HCT116 (cell line): ENCODE measurements at regions of chr11 and their contacts with region 1.

Region 1: GRCh38 chr11:120108154-120108865 is 29.6 kb downstream of the TRIM29 start:
- DNase-seq: no peak
- ATAC-seq: peak; percentile 97
- H3K4me3 ChIP-seq: no peak overlapping the region
- H3K27ac ChIP-seq: no peak overlapping the region
- H3K4me1 ChIP-seq: no peaks in the 10 kb centered on the region
- H3K27me3 ChIP-seq: peaks cover 20% of the 10 kb centered on the region; the same call in 1 of the 2 replicates
- CTCF ChIP-seq: peak; percentile 94 to 99 (median 99)
- POLR2A ChIP-seq: no peak
- RAD21 ChIP-seq: peak; percentile 99

Region 2: GRCh38 chr11:119481021-119481666 is 627.2 kb before region 1 on chr11:
- CTCF ChIA-PET with region 1: interaction called, 5 read pairs
- POLR2A ChIA-PET with region 1: no interaction called
- RAD21 ChIA-PET with region 1: no interaction called
- intact Hi-C with region 1: loop called (anchors 1 kb)
- DNase-seq: no peak
- ATAC-seq: peak; percentile 86
- H3K4me3 ChIP-seq: no peak overlapping the region
- H3K27ac ChIP-seq: no peak overlapping the region
- H3K4me1 ChIP-seq: peaks cover 3 to 22% of the 10 kb centered on the region in 2 experiments; a peak in 3 of 4 replicates
- H3K27me3 ChIP-seq: no peaks in the 10 kb centered on the region
- CTCF ChIP-seq: peak; percentile 93 to 99 (median 96)
- POLR2A ChIP-seq: no peak
- RAD21 ChIP-seq: peak; percentile 98

Region 3: GRCh38 chr11:119533921-119534736 is 574.2 kb before region 1 on chr11:
- CTCF ChIA-PET with region 1: interaction called, 3 read pairs
- POLR2A ChIA-PET with region 1: no interaction called
- RAD21 ChIA-PET with region 1: no interaction called
- intact Hi-C with region 1: loop called (anchors 2 kb)
- DNase-seq: peak; percentile 38
- ATAC-seq: peak; percentile 97
- H3K4me3 ChIP-seq: no peak overlapping the region
- H3K27ac ChIP-seq: no peak overlapping the region
- H3K4me1 ChIP-seq: peaks cover 0 to 6% of the 10 kb centered on the region in 2 experiments; a peak in 1 of 4 replicates
- H3K27me3 ChIP-seq: no peaks in the 10 kb centered on the region
- CTCF ChIP-seq: peak; percentile 94 to 99 (median 98)
- POLR2A ChIP-seq: no peak
- RAD21 ChIP-seq: peak; percentile 77

Region 4: DNA sequence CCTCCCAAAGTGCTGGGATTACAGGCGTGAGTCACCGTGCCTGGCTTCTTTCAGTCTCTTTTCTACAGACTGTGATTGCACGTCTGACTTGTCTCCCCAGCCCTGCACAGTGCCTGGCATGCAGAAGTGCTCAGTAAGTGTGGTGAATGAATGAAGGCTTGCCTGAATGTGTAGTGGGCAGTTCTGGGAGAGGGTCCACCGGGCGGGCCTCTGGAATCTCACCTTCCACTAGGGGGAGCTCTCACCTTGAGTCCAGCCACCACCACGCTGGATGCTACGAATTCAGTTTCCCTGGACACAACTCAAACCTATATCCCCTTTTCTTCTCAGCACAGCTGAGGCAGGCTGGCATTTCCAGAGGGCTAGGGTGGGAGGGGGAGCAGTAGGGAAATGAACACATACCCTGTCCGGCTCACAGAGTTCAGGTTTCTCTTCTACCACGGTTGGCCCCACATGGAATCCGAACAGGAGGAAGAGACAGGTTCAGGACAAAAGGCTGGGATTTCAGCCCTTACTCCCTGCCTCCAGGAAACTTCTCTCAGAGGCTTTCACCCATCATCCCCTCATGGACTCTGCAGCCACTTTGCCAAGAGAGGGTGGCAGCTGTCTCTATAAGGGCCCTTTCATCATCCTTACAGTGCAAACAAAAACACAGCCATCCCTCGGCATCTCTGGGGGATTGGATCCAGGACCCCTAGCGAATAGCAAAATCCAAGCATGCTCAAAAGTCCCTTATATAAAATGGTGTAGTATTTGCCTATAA is 466.1 kb before region 1 on chr11:
- CTCF ChIA-PET with region 1: no interaction called
- POLR2A ChIA-PET with region 1: no interaction called
- RAD21 ChIA-PET with region 1: no interaction called
- intact Hi-C with region 1: loop called (anchors 1 kb)
- DNase-seq: peak; percentile 4
- ATAC-seq: peak; percentile 84
- H3K4me3 ChIP-seq: no peak overlapping the region
- H3K27ac ChIP-seq: no peak overlapping the region
- H3K4me1 ChIP-seq: no peaks in the 10 kb centered on the region
- H3K27me3 ChIP-seq: no peaks in the 10 kb centered on the region
- CTCF ChIP-seq: peak; percentile 47 to 84 (median 81); a peak in 5 of 6 replicates
- POLR2A ChIP-seq: no peak
- RAD21 ChIP-seq: peak; percentile 72

Region 5: DNA sequence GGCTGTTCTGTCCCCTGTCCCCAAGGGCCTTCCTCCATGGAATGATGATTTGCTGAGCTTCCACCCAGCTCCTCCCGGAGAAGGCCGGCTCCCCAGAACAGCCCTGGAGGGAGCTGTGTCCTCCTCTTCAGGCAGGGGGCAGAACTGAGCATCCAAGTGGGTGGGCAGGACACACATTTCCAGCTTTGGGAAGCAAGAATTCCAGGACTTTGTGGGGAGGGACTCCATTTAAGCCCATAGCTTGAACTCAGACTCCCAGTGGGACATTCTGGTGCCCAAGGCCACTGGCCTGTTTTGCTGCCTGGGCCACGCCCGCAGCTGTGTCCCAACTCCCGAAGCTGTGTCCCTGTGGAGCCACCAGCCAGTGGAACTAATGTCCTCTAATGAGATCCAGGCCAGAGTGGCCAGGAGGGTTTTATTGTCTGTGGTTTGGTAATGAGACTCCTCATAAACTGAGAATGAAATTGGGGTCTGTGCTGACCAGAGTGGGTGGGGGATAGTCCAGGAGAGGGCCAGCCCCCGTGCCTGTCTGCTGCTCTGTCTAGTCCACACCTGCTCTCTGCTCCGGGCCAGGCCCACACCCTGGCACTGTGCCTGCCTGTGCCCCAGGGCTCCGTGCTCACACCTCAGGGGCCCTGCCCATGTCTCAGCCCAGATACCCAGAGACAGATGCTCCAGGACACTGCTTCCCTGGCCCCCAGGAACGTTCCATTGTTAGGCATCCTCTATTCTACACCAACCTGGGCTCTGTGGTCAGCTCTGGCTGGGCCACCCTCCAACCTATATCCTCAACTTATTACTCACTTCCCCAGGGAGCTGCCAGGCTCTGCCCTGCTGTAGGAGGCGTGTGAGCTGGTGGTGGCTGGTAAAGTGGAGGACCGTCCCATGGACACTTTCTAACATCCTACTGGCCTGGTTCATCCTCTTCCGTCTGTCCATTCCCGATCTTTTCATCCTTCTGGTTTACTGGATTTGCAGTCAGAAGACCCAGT is 386.9 kb before region 1 on chr11:
- CTCF ChIA-PET with region 1: interaction called, 7 read pairs
- POLR2A ChIA-PET with region 1: no interaction called
- RAD21 ChIA-PET with region 1: interaction called in 1 of 2 experiments, 3 read pairs
- intact Hi-C with region 1: loop called (anchors 5 kb)
- DNase-seq: no peak
- ATAC-seq: peak; percentile 97
- H3K4me3 ChIP-seq: no peak overlapping the region
- H3K27ac ChIP-seq: no peak overlapping the region
- H3K4me1 ChIP-seq: peaks cover 6 to 19% of the 10 kb centered on the region in 2 experiments
- H3K27me3 ChIP-seq: no peaks in the 10 kb centered on the region
- CTCF ChIP-seq: peak; percentile 30 to 75 (median 64); a peak in 5 of 6 replicates
- POLR2A ChIP-seq: no peak
- RAD21 ChIP-seq: no peak